Endothelial cell of umbilical vein (primary cell): ENCODE measurements at regions of chr17 and their contacts with region 1.

Region 1: DNA sequence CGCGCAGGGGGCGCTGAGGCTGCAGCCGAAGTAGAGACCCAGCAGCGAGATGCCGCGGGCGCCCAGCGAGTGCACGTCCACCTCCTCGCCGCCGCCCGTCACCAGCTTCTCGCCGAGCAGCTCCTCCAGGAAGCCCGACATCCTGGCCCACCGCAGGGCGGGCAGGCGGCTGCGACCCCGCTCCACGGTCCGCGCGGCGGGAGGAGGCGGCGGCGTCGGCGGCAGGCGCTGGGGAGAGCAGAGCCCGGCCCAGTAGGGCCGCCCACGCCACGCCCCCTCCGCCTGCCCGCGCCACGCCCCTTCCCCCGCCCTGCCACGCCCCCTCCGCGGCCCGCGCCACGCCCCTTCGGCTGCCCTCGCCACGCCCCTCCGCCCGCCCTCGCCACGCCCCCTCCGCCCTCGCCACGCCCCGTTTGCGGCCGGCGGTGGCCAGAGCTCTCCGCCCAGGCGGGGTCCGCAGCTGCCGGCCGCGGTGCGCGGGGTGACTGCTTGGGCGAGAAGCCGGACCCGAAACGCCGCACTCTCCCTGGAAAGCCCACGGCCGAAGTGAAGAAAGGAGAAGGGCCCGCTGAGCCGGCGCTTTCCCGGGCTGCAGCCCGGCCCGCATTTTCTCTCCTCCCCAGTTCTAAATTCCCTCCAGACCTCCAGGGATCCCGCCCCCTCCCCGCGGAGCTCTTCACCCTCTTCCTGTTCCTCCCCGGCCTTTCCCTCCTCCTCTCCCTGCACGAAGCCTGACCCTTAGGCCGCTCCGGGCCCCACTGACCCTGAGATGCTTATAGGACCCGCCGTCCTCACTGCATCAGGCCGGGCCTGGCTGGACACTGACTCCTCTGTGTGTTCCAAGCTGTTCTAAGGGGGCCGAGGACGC is at the start of gene NXN:
- DNase-seq: peak; percentile 80
- H3K4me3 ChIP-seq: peak within 1 kb of the TSS; percentile 84 to 93 (median 91)
- H3K27ac ChIP-seq: no peak within 1 kb of the TSS
- H3K4me1 ChIP-seq: peaks cover 21% of the 10 kb centered on the region
- H3K27me3 ChIP-seq: no peaks in the 10 kb centered on the region
- CTCF ChIP-seq: peak in 1 of 2 donors; percentile 45
- POLR2A ChIP-seq: peak; percentile 82
- total RNA-seq, gene NXN: 58.9 and 77.3 TPM in 2 replicates

Region 2: DNA sequence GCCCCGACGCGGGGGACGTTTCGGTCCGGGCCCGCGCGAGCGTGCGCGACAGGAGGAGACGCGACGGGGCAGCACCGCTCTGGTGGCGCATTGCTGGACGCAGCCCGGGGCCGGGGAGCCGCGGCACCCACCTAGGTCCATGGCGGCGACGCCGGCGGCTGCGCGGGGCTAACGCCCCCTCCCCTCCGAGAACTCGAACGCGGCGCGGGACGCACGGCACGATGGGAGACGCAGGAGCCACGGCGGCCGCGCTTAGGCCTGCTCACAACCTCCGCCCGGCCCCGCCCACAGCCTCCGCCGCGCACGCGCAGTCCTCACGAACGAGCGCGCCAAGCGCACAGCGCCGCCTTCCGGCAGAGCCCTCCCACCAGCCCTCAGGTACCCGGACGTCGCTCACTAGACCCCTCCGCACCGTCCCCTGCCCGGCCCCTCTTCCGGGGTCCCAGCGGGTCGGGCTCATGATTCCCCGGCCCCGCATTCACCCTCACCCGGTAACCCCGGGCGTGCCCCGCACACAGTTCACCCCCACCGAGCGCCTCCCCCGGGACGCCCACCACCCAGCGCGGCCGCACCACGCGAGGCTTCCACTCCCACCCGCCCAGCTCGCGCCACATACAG is 227.7 kb before region 1 on chr17 and contains the start of gene GEMIN4:
- CTCF ChIA-PET with region 1: interaction called, 9 read pairs
- POLR2A ChIA-PET with region 1: interaction called, 3 read pairs
- dilution Hi-C with region 1: no loop called
- intact Hi-C with region 1: loop called (anchors 1 kb)
- DNase-seq: peak; percentile 92
- H3K4me3 ChIP-seq: peak within 1 kb of the TSS; percentile 34 to 82 (median 78)
- H3K27ac ChIP-seq: peak within 1 kb of the TSS; percentile 30
- H3K4me1 ChIP-seq: peaks cover 18% of the 10 kb centered on the region
- H3K27me3 ChIP-seq: no peaks in the 10 kb centered on the region
- CTCF ChIP-seq: peak; percentile 94 to 99
- POLR2A ChIP-seq: peak; percentile 64
- total RNA-seq, gene GEMIN4: 29.1 and 29.9 TPM in 2 replicates

Region 3: DNA sequence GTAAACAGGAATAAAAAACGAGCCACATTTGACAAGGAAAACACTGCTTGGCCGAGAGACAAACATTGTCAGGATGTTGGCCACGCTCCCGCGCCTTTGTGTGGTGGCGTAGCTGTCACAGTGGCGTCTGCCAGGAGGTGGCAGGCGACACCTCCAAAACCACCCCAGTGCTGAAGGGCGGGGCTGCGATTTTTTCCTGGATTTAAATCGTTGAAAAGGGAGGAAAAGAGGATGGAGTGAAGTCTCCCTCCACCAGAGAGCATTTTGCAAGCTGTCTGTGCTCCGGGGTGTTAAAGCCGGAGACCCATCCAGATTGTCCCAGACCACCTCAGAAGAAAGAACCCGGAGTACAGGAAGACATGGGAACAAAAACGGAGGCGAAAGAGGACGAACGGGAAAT is 184.9 kb before region 1 on chr17:
- CTCF ChIA-PET with region 1: interaction called, 341 read pairs
- POLR2A ChIA-PET with region 1: interaction called, 3 read pairs
- dilution Hi-C with region 1: loop called (anchors 25 kb)
- intact Hi-C with region 1: loop called (anchors 1 kb)
- DNase-seq: peak; percentile 85
- H3K4me3 ChIP-seq: peak overlapping the region in 2 of 3 experiments; percentile 12 to 24
- H3K27ac ChIP-seq: no peak overlapping the region
- H3K4me1 ChIP-seq: peaks cover 10% of the 10 kb centered on the region
- H3K27me3 ChIP-seq: no peaks in the 10 kb centered on the region
- CTCF ChIP-seq: peak; percentile 79 to 94
- POLR2A ChIP-seq: no peak

Region 4: GRCh38 chr17:903981-904481 is 75.7 kb before region 1 on chr17:
- CTCF ChIA-PET with region 1: interaction called, 11 read pairs
- POLR2A ChIA-PET with region 1: no interaction called
- dilution Hi-C with region 1: no loop called
- intact Hi-C with region 1: loop called (anchors 5 kb)
- DNase-seq: peak; percentile 77
- H3K4me3 ChIP-seq: no peak overlapping the region
- H3K27ac ChIP-seq: peak overlapping the region; percentile 22
- H3K4me1 ChIP-seq: peaks cover 9% of the 10 kb centered on the region
- H3K27me3 ChIP-seq: no peaks in the 10 kb centered on the region
- CTCF ChIP-seq: no peak
- POLR2A ChIP-seq: no peak

Region 5: DNA sequence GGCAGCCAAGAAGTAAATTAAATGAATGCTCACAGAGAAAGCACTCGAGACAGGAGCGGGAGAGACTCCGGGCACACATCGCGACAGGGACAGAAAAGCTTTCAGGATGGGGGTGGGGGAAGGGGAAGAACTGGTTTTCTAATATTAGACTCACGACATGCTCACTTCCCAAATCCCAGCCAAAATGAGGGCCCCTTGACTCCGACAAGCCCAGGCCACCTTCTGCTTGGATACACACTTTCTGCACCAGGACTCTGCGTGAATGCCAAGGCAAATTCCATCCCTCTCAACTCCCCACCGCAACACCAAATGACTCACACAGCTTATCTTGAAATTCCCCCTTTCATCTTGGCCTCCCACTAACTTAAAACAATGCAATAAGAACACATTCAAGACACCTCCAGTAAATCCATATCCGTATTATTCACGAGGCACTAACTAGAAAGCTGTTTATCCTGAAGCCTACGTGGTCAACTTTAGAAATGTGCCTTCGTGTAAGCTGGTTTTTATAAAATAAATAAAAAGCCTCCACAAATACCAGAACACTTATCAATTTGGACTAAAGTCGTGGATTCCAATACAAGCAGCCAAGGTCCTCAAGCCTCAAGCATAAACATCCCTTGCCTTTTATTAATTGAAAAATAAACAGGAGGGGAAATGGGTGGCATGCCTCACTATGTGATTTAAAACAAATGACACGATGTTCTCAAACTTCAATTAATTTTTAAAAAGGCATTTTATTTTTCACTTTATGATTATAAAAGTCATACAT is 46.3 kb before region 1 on chr17:
- CTCF ChIA-PET with region 1: interaction called, 8 read pairs
- POLR2A ChIA-PET with region 1: no interaction called
- dilution Hi-C with region 1: no loop called
- intact Hi-C with region 1: loop called (anchors 5 kb)
- DNase-seq: peak; percentile 94
- H3K4me3 ChIP-seq: peak overlapping the region in 1 of 3 experiments; percentile 39
- H3K27ac ChIP-seq: peak overlapping the region; percentile 81
- H3K4me1 ChIP-seq: peaks cover 11% of the 10 kb centered on the region
- H3K27me3 ChIP-seq: no peaks in the 10 kb centered on the region
- CTCF ChIP-seq: no peak
- POLR2A ChIP-seq: peak; percentile 17